ENCODE measurements at regions of chr19 and their contacts with region 1.

Region 1: DNA sequence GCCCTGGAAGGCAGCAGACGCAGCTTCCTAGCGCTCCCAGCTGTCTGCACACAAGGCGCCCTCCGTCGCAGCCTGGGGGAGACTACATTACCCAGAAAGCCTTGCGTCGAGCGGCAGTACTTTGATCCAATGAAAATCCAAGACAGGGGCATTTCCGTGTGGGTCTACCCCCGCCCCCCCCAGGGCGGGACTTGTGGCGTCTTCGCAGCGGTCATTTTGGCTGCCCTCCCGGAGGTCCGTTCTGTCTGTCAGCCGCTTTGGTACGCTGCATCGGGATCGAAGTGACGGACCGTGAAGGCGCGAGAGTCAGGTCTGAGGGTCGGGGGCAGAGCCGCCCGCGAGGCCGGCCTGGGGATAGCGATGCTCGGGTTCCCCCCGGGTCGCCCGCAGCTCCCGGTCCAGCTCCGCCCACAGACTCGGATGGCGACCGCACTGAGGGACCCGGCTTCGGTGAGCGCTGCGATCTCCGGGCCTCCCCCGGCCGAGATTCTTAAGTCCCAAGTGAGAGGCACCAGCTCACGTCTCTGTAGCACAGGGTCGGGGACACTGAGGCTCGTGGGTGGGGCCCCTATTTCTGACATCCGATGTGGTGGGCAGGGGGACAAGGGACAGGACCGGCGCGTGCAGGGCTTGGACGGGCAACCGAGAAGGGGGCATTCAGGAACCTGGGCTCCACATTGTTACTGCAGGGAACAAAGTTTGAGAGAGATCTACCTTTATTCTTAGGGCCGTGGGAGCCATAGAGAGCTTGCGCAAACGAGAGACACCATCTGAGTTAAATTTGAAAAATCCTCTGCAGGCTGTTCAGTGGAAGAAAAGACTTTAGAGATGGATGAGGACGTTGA is at the start of gene ZNF211:
- DNase-seq: peak; percentile 94 to 95
- ATAC-seq: peak; percentile 99 to 100
- H3K4me3 ChIP-seq: peak within 1 kb of the TSS; percentile 71
- H3K27ac ChIP-seq: peak within 1 kb of the TSS; percentile 78 to 89
- H3K4me1 ChIP-seq: no peaks in the 10 kb centered on the region
- CTCF ChIP-seq: no peak
- EP300 ChIP-seq: no peak
- POLR2A ChIP-seq: peak; percentile 55
- RAD21 ChIP-seq: no peak
- polyA plus RNA-seq, gene ZNF211: 11.6 and 15.8 TPM in 2 replicates

Region 2: GRCh38 chr19:57465495-57466395 is 167.5 kb before region 1 on chr19:
- CTCF ChIA-PET with region 1: no interaction called
- POLR2A ChIA-PET with region 1: no interaction called
- DNase-seq: peak; percentile 28 to 73
- ATAC-seq: peak in 1 of 2 experiments; percentile 84; a peak in 3 of 6 replicates
- H3K4me3 ChIP-seq: no peak overlapping the region
- H3K27ac ChIP-seq: no peak overlapping the region
- H3K4me1 ChIP-seq: no peaks in the 10 kb centered on the region
- CTCF ChIP-seq: peak; percentile 0; the same call in 1 of the 3 replicates
- EP300 ChIP-seq: no peak
- POLR2A ChIP-seq: no peak
- RAD21 ChIP-seq: peak; percentile 26 to 77; a peak in 3 of 5 replicates

Region 3: GRCh38 chr19:57546513-57546912 is 86.7 kb before region 1 on chr19:
- CTCF ChIA-PET with region 1: no interaction called
- POLR2A ChIA-PET with region 1: no interaction called
- DNase-seq: no peak
- ATAC-seq: no peak
- H3K4me3 ChIP-seq: no peak overlapping the region
- H3K27ac ChIP-seq: no peak overlapping the region
- H3K4me1 ChIP-seq: no peaks in the 10 kb centered on the region
- CTCF ChIP-seq: no peak
- EP300 ChIP-seq: no peak
- POLR2A ChIP-seq: no peak
- RAD21 ChIP-seq: no peak

Region 4: GRCh38 chr19:57613941-57614743 is 19.1 kb before region 1 on chr19 and contains the start of gene ZNF134:
- CTCF ChIA-PET with region 1: interaction called, 4 read pairs
- POLR2A ChIA-PET with region 1: interaction called, 16 read pairs
- DNase-seq: peak; percentile 95
- ATAC-seq: peak; percentile 99 to 100
- H3K4me3 ChIP-seq: peak within 1 kb of the TSS; percentile 81
- H3K27ac ChIP-seq: peak within 1 kb of the TSS; percentile 65 to 88
- H3K4me1 ChIP-seq: no peaks in the 10 kb centered on the region
- CTCF ChIP-seq: no peak; the same call in 2 of the 3 replicates
- EP300 ChIP-seq: no peak
- POLR2A ChIP-seq: peak; percentile 30; the same call in 1 of the 2 replicates
- RAD21 ChIP-seq: peak in 1 of 2 experiments; percentile 13; a peak in 1 of 5 replicates
- polyA plus RNA-seq, gene ZNF134: 9.2 and 10.1 TPM in 2 replicates

Measured in A549 (cell line).